Psoas muscle (tissue), 8 donors: ENCODE measurements at regions of chr17 and their contacts with region 1.

Region 1: DNA sequence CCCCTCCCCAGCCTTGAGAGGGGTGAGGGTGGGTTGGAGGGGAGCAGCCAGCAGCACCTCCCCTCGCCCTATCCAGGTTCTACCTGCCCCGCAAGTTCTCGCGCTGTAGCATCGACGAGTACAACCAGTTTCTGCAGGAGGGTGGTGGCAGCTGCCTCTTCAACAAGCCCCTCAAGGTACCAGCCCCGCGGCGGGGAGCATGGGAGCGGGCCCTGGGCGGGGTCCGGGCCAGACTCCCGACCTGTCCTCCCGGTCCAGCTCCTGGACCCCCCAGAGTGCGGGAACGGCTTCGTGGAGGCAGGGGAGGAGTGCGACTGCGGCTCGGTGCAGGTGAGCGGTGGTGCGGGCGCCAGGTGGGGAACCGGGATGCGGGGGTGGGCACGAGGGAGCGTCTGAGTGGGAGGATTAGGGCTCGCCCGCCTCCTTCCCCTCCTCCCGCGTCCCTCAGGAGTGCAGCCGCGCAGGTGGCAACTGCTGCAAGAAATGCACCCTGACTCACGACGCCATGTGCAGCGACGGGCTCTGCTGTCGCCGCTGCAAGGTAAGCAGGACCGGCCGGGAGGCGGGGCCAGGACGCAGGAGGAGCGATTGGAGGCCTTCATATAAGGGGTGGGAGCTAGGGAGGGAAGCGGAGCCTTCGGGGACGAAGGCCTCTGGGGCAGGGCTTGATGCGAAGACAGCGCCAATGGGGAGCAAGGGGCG is 16.5 kb downstream of the ADAM11 start:
- DNase-seq: peak; percentile 93 to 96
- ATAC-seq: peak; percentile 93 to 96 (median 95)
- H3K4me3 ChIP-seq: peak overlapping the region; percentile 66
- H3K27ac ChIP-seq: no peak overlapping the region
- H3K4me1 ChIP-seq: peaks cover 14% of the 10 kb centered on the region
- H3K27me3 ChIP-seq: peaks cover 0 to 20% (median 0%) of the 10 kb centered on the region in 3 donors
- CTCF ChIP-seq: no peak

Region 2: DNA sequence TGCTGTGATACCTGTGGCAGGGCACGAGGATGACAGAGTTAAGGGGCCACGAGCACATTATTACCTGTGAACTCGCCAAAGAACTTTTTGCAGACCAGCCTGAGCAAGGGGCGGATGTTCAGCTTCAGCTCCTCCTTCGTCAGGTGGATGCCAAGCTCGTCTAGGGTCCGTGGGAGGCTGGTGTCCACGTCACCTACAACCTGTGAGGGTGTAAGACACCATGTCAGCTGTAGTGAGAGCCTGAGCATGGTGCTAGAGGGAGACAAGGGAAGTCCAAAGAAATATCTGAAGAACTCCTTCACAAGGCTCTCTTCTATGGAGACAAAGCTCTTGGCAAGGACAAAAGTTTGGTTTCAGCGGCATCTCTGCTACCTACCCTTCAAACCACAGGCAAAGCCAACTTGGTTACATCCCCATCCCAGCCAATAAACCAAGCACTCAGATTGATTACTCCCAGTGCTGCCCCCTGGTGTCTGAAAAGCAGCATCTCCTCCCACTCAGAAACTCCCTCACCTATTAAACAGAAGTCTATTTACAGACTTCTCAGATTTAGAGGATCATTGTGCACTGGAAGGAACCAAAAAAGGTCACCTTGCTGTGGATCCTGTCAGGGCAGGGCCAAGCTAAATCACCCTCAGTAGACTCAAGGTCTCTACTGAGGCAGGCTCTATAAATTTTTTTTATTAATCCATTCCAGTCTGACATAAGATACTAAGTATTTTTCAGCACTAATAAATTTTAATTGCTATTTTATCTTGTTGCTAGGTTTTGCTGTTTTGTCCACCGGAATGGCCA is 89.8 kb after region 1 on chr17:
- intact Hi-C with region 1: loop called (anchors 1 to 2 kb)
- DNase-seq: peak; percentile 40 to 66
- ATAC-seq: peak; percentile 70 to 84 (median 71)
- H3K4me3 ChIP-seq: no peak overlapping the region
- H3K27ac ChIP-seq: no peak overlapping the region
- H3K4me1 ChIP-seq: no peaks in the 10 kb centered on the region
- H3K27me3 ChIP-seq: no peaks in the 10 kb centered on the region
- CTCF ChIP-seq: peak; percentile 80